Activated naive CD4-positive, alpha-beta T cell treated with anti-CD3 and anti-CD28 coated beads for 36 hours (primary cell): ENCODE measurements at regions of chr5 and their contacts with region 1.

Region 1: GRCh38 chr5:112691758-112692157 is 45.9 kb upstream of the APC start:
- DNase-seq: peak; percentile 63
- H3K4me3 Mint-ChIP-seq: no peak overlapping the region
- H3K27ac Mint-ChIP-seq: no peak overlapping the region
- H3K4me1 Mint-ChIP-seq: no peaks in the 10 kb centered on the region
- H3K27me3 Mint-ChIP-seq: peaks cover 4% of the 10 kb centered on the region

Region 2: GRCh38 chr5:112551419-112552032 is 140.2 kb before region 1 on chr5:
- CTCF ChIA-PET with region 1: interaction called, 7 read pairs
- intact Hi-C with region 1: loop called (anchors 1 kb)
- DNase-seq: peak; percentile 45
- H3K4me3 Mint-ChIP-seq: no peak overlapping the region
- H3K27ac Mint-ChIP-seq: no peak overlapping the region
- H3K4me1 Mint-ChIP-seq: no peaks in the 10 kb centered on the region
- H3K27me3 Mint-ChIP-seq: no peaks in the 10 kb centered on the region

Region 3: DNA sequence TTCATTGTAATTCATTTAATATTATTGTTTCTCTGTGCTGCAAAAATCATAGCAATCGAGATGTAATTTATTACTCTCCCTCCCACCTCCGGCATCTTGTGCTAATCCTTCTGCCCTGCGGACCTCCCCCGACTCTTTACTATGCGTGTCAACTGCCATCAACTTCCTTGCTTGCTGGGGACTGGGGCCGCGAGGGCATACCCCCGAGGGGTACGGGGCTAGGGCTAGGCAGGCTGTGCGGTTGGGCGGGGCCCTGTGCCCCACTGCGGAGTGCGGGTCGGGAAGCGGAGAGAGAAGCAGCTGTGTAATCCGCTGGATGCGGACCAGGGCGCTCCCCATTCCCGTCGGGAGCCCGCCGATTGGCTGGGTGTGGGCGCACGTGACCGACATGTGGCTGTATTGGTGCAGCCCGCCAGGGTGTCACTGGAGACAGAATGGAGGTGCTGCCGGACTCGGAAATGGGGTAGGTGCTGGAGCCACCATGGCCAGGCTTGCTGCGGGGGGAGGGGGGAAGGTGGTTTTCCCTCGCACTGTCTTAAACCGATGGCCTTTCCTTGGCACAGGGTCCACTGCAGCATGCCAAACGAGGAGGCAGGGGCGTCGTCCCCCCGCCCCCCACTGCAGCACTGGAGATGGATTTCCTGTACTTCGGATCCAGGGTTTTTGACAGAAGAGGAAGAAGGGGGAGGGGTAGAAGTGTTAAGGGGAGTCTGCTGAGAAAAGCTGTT is 45.9 kb after region 1 on chr5 and contains the start of gene APC:
- CTCF ChIA-PET with region 1: interaction called, 11 read pairs
- intact Hi-C with region 1: no loop called
- DNase-seq: peak; percentile 92
- H3K4me3 Mint-ChIP-seq: peak within 1 kb of the TSS; percentile 95
- H3K27ac Mint-ChIP-seq: no peak within 1 kb of the TSS
- H3K4me1 Mint-ChIP-seq: peaks cover 18% of the 10 kb centered on the region
- H3K27me3 Mint-ChIP-seq: no peaks in the 10 kb centered on the region
- total RNA-seq, gene APC: 15.6 to 17.2 TPM

Region 4: DNA sequence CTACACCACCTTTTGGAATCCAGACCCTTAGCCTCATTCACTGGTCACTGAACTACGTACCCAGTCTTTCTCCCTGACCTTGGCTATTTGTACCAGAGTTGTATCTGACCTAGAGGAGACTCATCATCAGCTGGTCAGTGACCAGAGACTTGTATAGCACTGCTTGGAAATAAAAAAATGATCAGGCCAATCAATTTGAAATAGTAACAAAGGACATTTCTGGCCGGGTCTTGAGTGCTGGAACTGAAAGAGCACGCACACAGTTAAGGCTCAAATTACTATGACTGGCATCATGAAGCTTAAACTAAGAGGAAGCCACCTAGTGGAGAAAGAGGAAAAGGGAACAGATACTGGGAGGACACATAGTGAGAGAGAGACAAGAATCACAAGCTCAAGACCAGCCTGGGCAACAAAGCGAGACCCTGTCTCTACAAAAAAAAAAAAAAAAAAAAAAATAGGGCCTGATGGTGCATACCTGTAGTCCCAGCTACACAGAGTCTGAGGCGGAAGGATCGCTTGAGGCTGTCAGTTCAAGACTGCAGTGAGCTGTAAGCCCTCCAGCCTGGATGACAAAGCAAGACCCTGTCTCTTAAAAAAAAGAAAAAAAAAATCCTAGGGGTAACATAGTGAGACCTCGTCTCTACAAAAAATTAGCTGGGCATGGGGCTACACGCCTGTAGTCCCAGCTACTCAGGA is 156.5 kb after region 1 on chr5:
- CTCF ChIA-PET with region 1: no interaction called
- intact Hi-C with region 1: loop called (anchors 1 kb)
- DNase-seq: no peak
- H3K4me3 Mint-ChIP-seq: no peak overlapping the region
- H3K27ac Mint-ChIP-seq: no peak overlapping the region
- H3K4me1 Mint-ChIP-seq: peaks cover 3% of the 10 kb centered on the region
- H3K27me3 Mint-ChIP-seq: peaks cover 3% of the 10 kb centered on the region

Region 5: DNA sequence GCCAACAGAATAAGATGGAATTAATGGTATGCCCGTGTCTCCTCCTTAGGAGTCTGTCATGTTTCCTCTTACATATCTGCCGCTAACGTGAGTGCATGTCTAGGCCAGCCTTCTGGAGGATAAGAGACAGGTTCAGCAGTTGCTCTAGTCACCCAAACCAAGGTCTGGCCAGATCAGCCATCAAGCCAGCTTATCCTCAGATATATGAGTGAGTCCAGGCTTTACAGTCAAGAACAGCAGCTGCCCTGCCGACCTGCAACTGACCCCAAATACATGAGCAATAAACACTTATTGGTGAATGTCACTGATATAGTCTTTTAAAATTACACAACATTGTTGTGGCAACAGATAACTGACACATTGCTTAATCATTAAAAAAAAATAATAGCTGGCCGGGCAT is 619.5 kb after region 1 on chr5:
- CTCF ChIA-PET with region 1: no interaction called
- intact Hi-C with region 1: no loop called
- DNase-seq: no peak
- H3K4me3 Mint-ChIP-seq: no peak overlapping the region
- H3K27ac Mint-ChIP-seq: no peak overlapping the region
- H3K4me1 Mint-ChIP-seq: no peaks in the 10 kb centered on the region
- H3K27me3 Mint-ChIP-seq: peaks cover 9% of the 10 kb centered on the region